IMR-90 (cell line): ENCODE measurements at regions of chr17 and their contacts with region 1.

Region 1: DNA sequence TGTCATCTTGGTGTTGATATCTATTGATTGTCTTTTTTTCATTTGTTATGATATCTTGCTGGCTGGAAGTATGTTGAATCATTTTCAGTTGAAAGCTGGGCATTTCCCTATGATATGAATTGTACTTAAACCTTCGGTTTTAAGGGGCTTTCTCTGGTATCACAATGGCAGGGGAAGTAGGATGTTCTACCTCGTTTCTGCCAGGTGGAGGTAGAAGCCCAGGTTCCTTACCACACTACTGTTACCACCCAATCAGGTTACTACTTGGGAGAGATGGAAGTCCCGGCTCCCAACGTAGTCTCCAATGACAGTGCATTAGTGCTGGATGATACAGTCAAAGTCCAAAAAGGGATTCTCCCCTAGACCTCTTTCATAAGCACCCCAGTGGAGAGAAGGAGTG is 281.6 kb upstream of the TBX2 start:
- DNase-seq: no peak
- ATAC-seq: no peak
- H3K4me3 ChIP-seq: no peak overlapping the region
- H3K27ac ChIP-seq: no peak overlapping the region
- H3K4me1 ChIP-seq: no peaks in the 10 kb centered on the region
- H3K27me3 ChIP-seq: no peaks in the 10 kb centered on the region
- CTCF ChIP-seq: no peak
- POLR2A ChIP-seq: no peak
- RAD21 ChIP-seq: no peak

Region 2: DNA sequence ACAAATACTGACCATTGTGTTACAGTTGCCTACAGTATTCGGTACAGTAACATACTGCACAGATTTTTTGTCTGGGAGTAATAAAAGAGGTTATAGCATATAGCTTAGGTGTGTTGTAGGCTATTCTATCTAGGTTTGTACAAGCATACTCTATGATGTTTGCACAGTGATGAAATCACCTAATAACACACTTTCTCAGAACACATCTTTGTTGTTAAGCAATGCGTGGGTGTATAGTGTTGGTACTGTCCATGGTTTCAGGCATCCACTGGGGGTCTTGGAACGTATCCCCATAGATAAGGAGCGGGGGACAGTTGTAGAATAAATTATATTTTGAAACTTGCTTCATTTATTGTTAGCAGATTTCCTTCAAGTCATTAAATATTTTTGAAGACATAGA is 11.6 kb before region 1 on chr17:
- CTCF ChIA-PET with region 1: no interaction called
- POLR2A ChIA-PET with region 1: no interaction called
- dilution Hi-C with region 1: no loop called
- in situ Hi-C with region 1: no loop called
- intact Hi-C with region 1: loop called (anchors 2 kb)
- DNase-seq: no peak
- ATAC-seq: no peak
- H3K4me3 ChIP-seq: no peak overlapping the region
- H3K27ac ChIP-seq: no peak overlapping the region
- H3K4me1 ChIP-seq: no peaks in the 10 kb centered on the region
- H3K27me3 ChIP-seq: no peaks in the 10 kb centered on the region
- CTCF ChIP-seq: no peak
- POLR2A ChIP-seq: no peak
- RAD21 ChIP-seq: no peak

Region 3: DNA sequence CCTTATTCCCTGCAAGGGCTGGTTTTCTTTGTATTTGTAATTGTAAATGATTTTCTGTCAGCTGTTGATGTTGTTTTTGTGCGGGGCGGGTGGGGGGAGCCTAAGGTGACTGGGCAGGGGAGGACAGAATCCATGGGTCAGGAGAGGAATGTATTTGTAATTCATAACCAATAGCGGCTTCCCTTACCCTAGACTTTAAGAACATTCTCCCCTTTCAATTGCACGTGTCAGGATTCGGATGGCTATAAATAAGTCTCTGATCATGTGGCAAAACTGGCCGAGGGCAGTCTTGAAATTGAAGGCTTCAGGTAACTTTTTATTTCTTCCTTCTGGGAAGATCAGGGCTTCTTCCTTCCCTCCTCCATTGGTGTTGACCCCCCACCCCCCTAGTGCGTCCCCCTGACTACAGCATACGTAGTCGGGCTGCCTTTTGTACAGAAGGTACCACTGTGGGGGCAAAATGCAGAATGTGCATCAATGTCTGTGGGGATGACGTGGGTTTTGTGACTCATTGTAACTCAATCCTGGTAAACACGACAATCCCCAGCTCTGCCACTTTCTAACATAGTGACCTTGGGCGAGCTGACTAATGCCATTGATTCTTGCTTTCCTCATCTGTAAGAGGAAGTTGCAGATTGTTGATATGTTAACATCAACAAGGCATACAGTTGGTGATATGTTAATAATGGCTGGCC is 1673.9 kb after region 1 on chr17:
- CTCF ChIA-PET with region 1: no interaction called
- POLR2A ChIA-PET with region 1: no interaction called
- dilution Hi-C with region 1: no loop called
- in situ Hi-C with region 1: no loop called
- intact Hi-C with region 1: no loop called
- DNase-seq: peak; percentile 100
- ATAC-seq: peak; percentile 52
- H3K4me3 ChIP-seq: no peak overlapping the region
- H3K27ac ChIP-seq: peak overlapping the region; percentile 92
- H3K4me1 ChIP-seq: peaks cover 14% of the 10 kb centered on the region
- H3K27me3 ChIP-seq: no peaks in the 10 kb centered on the region
- CTCF ChIP-seq: no peak
- POLR2A ChIP-seq: no peak; the same call in 1 of the 2 replicates
- RAD21 ChIP-seq: peak; percentile 26